Left cardiac atrium (tissue), 4 donors: ENCODE measurements at regions of chr10 and their contacts with region 1.

Region 1: GRCh38 chr10:58177362-58177947 is 90.2 kb downstream of the IPMK start:
- DNase-seq: no peak
- ATAC-seq: no peak

Region 2: GRCh38 chr10:57098146-57098545 is 1079.3 kb before region 1 on chr10:
- intact Hi-C with region 1: no loop called
- DNase-seq: no peak
- ATAC-seq: no peak

Region 3: DNA sequence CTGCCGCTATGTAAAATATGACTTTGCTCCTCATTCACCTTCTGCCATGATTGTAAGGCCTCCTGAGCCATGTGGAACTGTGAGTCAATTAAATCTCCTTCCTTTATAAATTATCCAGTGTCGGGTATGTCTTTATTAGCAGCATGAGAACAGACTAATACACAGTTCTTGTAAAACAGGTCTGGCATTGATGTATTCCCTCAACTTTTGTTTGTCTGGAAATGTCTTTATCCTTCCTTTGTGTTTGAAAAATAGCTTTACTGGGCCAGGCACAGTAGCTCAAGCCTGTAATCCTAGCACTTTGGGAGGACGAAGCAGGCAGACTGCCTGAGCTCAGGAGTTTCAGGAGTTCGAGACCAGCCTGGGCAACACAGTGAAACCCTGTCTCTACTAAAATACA is 75.7 kb after region 1 on chr10:
- intact Hi-C with region 1: no loop called
- DNase-seq: no peak
- ATAC-seq: no peak

Region 4: GRCh38 chr10:58291538-58292174 is 114.2 kb after region 1 on chr10:
- intact Hi-C with region 1: loop called (anchors 2 to 5 kb)
- DNase-seq: no peak
- ATAC-seq: peak; percentile 70 to 71